Posterior vena cava (tissue), 2 donors: ENCODE measurements at regions of chr15 and their contacts with region 1.

Region 1: GRCh38 chr15:47273864-47274263 is 443.4 kb upstream of the SEMA6D start:
- DNase-seq: no peak

Region 2: DNA sequence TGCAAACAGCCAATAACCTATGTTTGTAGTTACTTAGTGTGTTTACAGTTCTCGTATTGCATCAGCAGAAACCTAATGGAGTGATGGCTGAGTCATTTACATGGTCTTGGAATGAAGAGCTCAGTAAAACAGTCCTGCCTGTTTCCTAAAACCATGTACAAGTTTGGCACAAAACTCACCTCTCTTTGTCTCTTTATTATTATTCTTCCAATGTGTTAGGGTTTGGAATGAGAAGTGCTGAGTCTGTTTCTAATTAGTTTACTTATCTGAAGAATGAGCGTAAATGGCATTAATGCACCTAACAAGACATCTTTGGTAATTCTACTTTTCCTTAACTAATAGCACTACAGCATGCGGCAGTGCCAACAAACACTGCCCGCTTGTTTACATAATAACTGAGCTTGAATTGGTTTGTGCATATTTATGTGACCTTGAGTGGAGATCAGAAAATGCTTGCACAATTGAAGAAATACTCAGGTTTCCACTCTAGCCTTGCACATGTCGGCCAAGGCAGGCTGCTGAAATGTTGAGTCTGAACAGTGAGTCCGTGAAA is 58.1 kb after region 1 on chr15:
- intact Hi-C with region 1: no loop called
- DNase-seq: no peak

Region 3: GRCh38 chr15:47929138-47929803 is 655.4 kb after region 1 on chr15:
- intact Hi-C with region 1: loop called in 1 of 2 experiments (anchors 10 kb)
- DNase-seq: no peak